AG04449 (cell line): ENCODE measurements at regions of chr14 and their contacts with region 1.

Region 1: DNA sequence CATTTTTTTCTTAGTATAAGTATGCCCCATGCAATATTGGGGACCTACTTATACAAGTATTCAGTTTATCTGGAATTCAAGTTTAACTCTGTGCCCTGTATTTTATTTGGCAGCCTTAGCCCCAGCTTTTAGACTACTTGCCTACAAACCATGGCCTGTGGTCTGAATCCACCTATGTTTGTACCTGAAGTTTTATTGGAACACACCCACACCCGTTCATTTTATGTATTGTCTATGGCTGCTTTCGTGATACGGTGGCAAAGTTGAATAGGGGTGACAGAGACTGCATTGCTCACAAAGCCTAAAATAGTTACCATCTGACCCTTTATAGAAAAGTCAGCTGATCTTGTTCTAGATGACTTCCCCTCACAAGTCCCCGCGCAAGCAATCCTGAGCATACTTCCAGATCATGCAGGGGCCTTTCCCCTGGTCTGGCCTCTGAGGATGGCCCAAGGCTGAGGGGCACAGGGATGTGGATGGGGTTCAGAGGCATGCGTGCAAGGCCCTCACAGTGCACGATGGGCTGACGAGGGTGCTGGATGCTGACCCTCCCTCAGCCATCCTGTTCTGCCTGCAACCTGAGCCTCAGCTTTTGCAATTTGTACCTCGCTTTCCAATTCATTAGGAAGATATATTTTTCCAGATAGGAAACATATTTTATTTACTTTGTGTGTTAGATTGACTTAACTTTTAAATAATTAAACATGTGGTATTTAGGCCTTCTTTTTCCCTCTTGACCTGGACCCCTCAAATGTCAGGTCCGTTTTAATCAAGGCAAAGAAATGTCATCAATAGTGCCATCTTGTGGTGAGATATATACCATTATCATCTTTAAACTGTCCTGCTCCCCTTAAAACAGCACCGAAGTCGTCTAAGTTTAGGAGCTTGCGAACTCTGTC is 527.3 kb upstream of the CCDC196 start:
- DNase-seq: no peak
- H3K4me3 ChIP-seq: no peak overlapping the region
- CTCF ChIP-seq: peak; percentile 18

Region 2: DNA sequence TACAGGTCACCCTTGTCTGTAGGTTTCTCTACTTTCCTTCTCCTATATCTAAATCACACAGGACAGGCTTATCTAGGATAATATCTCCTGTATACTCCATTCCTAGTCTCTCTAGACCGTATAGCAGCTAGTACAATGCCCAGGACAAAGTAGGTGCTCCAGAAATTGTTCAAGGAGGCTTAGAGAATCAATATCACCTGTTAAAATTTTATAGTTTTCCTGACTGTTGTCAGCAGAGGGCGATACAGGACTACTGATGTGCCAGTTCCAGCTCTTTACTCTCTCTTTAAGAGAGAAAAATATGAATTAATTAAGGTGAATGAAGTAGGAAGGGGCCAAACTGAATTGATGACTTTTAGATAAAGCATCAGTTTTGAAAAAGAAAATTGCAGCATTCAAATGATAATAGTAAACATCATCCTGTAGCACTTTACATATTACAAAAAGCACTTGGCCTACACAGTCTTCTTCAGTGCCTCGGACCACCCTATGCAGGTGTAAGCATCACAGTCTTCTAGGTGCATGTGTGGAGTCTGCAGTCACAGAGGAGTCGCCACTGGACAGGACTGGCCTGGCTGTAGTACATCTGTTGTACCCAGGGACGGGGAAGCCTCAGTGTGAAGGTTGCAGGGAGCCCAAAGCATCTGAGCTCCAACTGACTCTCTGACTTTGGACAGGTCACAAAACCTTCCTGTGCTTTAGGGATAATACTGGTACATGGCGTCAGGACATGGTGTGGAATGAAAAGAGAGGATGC is 794.7 kb before region 1 on chr14:
- CTCF ChIA-PET with region 1: interaction called, 78 read pairs
- POLR2A ChIA-PET with region 1: no interaction called
- DNase-seq: no peak
- H3K4me3 ChIP-seq: no peak overlapping the region
- CTCF ChIP-seq: peak; percentile 22

Region 3: GRCh38 chr14:65169351-65169750 is 789.6 kb before region 1 on chr14:
- CTCF ChIA-PET with region 1: interaction called, 78 read pairs
- POLR2A ChIA-PET with region 1: no interaction called
- DNase-seq: no peak
- H3K4me3 ChIP-seq: no peak overlapping the region
- CTCF ChIP-seq: no peak

Region 4: GRCh38 chr14:65940056-65940733 is 18.7 kb before region 1 on chr14:
- CTCF ChIA-PET with region 1: interaction called, 17 read pairs
- POLR2A ChIA-PET with region 1: no interaction called
- DNase-seq: no peak
- H3K4me3 ChIP-seq: no peak overlapping the region
- CTCF ChIP-seq: no peak

Region 5: DNA sequence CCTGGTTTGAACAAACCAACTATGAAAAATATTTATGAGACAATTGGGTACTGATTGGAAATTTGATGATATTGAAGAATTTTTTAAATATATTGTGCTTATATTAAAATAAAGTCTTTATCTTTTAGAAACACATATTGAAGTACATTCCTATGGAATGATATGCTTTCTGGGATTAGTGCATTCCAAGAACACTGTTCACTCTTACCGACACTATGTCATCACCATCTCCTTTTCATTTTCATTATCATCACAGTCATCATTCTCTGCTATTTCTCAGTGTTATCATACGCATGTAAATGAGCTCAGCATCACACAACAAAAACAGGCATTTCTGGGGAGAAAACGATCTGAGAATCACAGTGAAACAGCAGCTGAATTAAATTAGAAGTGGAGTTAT is 14.0 kb after region 1 on chr14:
- CTCF ChIA-PET with region 1: interaction called, 57 read pairs
- POLR2A ChIA-PET with region 1: no interaction called
- DNase-seq: peak; percentile 29
- H3K4me3 ChIP-seq: no peak overlapping the region
- CTCF ChIP-seq: no peak

Region 6: GRCh38 chr14:66070509-66071319 is 111.8 kb after region 1 on chr14:
- CTCF ChIA-PET with region 1: interaction called, 17 read pairs
- POLR2A ChIA-PET with region 1: no interaction called
- DNase-seq: no peak
- H3K4me3 ChIP-seq: no peak overlapping the region
- CTCF ChIP-seq: peak; percentile 85